Kidney (tissue), 22 donors: ENCODE measurements at regions of chr1 and their contacts with region 1.

Region 1: GRCh38 chr1:155940531-155940992 is 876 bp upstream of the RXFP4 start:
- DNase-seq: peak in 4 of 5 donors; percentile 23 to 84 (median 51)
- H3K4me3 ChIP-seq: peak overlapping the region in 1 of 3 donors; percentile 40
- H3K27ac ChIP-seq: peak overlapping the region; percentile 90 to 95
- H3K4me1 ChIP-seq: peaks cover 3 to 32% (median 24%) of the 10 kb centered on the region in 3 donors
- H3K27me3 ChIP-seq: no peaks in the 10 kb centered on the region
- CTCF ChIP-seq: no peak

Region 2: DNA sequence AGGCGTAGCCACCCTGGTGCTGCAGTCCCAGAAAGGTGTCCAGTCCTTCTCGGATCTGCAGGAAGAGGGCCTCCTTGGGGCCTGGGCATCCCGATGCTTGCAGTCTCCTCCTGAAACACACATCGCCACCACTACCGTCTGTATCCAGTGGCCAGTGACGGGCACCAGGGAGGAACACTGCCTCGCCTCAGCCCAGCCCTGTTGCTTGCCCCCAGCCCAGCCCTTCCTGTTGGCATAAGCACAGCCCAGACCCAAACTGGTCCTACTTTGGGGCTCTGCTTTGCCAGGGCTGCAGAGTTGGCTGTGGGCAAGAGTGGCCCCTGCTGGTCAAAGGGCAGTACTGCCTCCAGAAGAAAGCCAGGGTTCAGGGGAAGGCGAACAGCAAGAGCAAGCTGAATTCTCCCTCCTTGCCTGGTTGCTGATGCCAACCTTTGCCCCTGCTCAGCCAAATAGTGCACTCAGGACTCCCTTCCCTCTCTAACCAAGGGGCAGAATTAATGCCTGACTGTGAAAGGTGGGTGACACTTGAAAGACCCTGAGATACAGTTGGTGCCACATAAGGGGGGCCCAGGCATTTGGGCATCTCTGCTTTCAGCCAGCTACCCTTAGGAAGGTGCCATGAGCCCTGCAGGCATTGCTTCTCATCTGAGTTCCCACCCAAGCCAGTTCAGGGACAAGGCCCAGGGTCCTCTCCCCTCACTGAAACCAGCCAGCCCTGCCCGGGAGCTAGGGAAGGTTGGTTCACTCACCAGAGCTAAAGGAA is 48.9 kb after region 1 on chr1:
- intact Hi-C with region 1: loop called (anchors 5 kb)
- DNase-seq: peak; percentile 82 to 89 (median 85)
- H3K4me3 ChIP-seq: peak overlapping the region in 2 of 3 donors; percentile 30 to 58
- H3K27ac ChIP-seq: peak overlapping the region in 1 of 2 donors; percentile 30
- H3K4me1 ChIP-seq: peaks cover 0 to 8% (median 5%) of the 10 kb centered on the region in 3 donors
- H3K27me3 ChIP-seq: no peaks in the 10 kb centered on the region
- CTCF ChIP-seq: peak; percentile 100

Region 3: DNA sequence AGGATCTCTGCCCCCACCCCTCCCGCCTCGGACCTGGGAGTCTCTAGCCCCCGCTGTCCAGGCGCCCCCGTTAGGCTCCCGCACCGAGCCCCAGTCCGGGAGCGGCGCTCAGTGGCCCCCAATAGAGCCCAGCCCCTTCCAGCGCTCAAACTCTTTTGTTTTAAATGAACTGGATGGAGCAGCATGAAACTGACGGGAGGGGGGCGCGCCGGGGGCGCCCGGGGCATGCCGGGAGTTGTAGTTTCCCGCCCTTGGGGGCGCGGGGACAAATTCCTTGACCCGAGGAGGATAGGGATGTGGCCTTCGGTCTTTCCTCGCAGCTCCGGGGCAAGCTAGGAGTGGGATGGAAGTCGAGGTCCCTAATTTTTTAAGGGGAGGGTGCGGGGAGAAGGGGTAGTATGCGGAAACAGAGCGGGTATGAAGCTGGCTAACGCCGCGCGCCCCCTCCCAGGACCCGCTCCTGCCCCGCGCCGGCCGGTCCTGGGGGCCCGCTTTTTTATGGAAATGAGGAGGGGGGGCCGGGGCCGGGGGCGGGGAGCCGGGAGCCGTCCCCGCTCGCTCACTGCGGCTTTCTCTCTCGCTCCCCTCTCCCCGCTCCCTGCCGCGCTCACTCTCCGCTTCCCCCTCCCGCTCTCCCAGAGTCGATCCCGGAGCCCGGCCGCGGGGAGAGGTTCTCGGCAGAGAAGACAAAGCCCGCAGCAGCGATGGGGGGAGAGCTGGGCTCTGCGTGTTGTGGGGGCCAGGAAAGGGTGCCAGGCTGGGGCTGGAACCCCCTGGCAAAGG is 141.9 kb after region 1 on chr1 and contains the start of gene MEX3A:
- intact Hi-C with region 1: no loop called
- DNase-seq: peak; percentile 87 to 97 (median 96)
- H3K4me3 ChIP-seq: peak within 1 kb of the TSS; percentile 68 to 81 (median 78)
- H3K27ac ChIP-seq: no peak within 1 kb of the TSS
- H3K4me1 ChIP-seq: peaks cover 0 to 6% (median 4%) of the 10 kb centered on the region in 3 donors
- H3K27me3 ChIP-seq: no peaks in the 10 kb centered on the region
- CTCF ChIP-seq: no peak
- total RNA-seq, gene MEX3A: 1.7 TPM